ENCODE measurements at regions of chr9 and their contacts with region 1.

Region 1: DNA sequence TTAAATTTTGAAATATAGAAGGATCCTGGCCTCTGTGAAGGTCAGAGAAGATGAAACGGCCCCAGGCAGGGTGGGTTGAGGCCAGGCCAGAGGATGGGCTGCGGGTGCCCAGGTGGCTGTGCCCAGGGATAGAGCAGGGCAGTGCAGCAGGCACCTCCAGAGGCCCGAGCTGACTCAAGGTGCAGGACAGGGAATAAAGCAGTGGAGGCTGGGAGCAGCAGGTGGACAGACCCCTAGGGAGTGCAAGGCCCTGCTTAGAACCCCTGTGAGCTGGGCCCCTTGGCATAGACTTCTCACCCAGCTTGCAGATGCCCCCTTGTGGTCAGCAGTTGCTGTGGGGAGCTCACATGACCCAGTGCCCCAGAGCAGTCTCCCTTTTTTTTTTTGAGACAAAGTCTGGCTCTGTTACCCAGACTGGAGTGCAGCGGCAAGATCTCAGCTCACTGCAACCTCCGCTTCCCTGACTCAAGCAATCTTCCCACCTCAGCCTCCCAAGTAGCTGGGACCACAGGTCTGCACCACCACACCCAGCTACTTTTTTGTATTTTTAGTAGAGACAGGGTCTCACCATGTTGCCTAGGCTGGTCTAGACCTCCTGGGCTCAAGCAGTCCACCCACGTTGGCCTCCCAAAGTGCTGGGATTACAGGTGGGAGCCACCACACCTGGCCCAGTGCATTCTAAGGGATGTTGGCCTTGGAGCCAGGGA is 118.8 kb downstream of the WNK2 start:
- DNase-seq: peak; percentile 72
- ATAC-seq: peak; percentile 40
- H3K4me3 Mint-ChIP-seq: no peak overlapping the region
- H3K27ac Mint-ChIP-seq: no peak overlapping the region
- H3K4me1 Mint-ChIP-seq: peaks cover 12% of the 10 kb centered on the region
- H3K27me3 Mint-ChIP-seq: no peaks in the 10 kb centered on the region
- CTCF ChIP-seq: peak; percentile 47

Region 2: DNA sequence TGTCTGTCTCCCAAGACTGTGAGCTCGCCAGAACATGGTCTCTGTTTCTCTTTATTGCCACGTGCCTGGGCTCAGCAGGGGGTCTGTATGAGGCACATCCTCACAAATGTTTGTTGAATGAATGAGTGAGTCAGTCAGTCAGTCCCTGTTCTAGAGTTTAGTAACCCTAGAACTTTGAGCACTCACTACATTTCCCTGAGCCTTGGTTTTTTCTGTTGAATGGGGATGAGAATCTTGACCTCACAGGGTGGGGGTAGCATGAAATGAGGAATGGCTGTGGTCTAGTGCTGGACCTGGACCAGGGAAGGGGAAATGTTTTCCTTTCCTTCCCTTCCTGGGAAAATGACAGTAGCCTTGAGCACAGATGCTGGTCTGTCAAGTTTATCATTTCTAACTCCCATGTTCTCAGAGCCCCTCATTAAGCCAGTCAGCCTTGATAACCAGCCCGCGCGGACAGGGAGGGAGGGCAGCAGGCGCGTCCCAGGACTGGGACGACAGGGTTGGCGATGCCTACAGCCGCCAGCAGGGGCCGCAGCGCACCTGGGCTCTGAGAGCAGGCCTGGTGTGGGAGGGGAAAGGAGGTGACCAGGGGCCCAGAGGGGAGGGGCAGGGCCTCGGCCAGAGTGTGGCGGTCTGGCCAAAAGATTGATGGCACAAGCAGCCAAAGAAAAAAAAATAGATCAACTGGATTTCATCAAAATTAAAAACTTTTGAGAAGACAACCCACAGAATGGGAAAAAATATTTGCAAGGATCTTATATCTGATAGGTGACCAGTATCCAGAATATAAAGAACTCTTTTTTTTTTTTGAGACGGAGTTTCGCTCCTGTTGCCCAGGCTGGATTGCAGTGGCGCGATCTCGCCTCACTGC is 142.9 kb before region 1 on chr9:
- CTCF ChIA-PET with region 1: interaction called, 30 read pairs
- POLR2A ChIA-PET with region 1: no interaction called
- DNase-seq: peak; percentile 96
- ATAC-seq: peak; percentile 99
- H3K4me3 Mint-ChIP-seq: no peak overlapping the region
- H3K27ac Mint-ChIP-seq: no peak overlapping the region
- H3K4me1 Mint-ChIP-seq: no peaks in the 10 kb centered on the region
- H3K27me3 Mint-ChIP-seq: peaks cover 3% of the 10 kb centered on the region; the same call in 1 of the 2 replicates
- CTCF ChIP-seq: peak; percentile 91

Region 3: GRCh38 chr9:93183609-93184431 is 118.9 kb before region 1 on chr9 and contains the start of gene WNK2:
- CTCF ChIA-PET with region 1: interaction called, 11 read pairs
- POLR2A ChIA-PET with region 1: no interaction called
- DNase-seq: peak; percentile 55
- ATAC-seq: peak; percentile 67
- H3K4me3 Mint-ChIP-seq: peak within 1 kb of the TSS; percentile 71
- H3K27ac Mint-ChIP-seq: no peak within 1 kb of the TSS
- H3K4me1 Mint-ChIP-seq: peaks cover 29% of the 10 kb centered on the region
- H3K27me3 Mint-ChIP-seq: peaks cover 31% of the 10 kb centered on the region
- CTCF ChIP-seq: no peak
- total RNA-seq, gene WNK2: 113 to 121 TPM (median 120 TPM) in 3 replicates

Region 4: DNA sequence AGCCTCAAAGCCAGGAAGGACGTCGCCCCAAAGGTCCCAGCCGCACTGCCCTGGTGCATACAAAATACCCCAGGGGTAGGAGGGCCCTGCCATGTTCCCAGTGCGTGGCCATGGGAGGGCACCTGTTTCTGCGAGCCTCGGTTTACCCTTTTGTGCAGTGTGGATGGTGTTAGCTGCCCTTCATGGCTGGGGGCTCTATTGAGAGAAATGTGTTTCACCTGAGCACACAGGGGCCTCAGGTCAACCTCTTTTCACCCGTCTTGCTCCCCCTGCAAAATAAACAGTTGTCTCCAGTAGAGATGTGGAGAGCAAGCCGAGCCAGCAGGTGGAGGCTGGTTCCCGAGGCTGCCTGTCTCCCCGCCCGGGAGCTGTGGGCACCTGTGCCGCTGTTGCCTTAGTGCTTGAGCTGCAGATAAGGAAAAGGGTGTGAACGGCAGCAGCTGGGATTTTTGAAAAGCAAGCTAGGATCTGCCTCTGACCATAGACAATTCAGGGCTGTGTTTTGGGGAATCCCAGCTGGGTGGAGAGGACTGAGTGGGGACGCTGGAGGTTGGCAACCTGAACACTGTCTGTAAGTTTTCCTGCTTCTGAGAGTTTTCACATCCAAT is 109.5 kb before region 1 on chr9:
- CTCF ChIA-PET with region 1: interaction called, 10 read pairs
- POLR2A ChIA-PET with region 1: no interaction called
- DNase-seq: no peak
- ATAC-seq: no peak
- H3K4me3 Mint-ChIP-seq: no peak overlapping the region
- H3K27ac Mint-ChIP-seq: peak overlapping the region; percentile 63
- H3K4me1 Mint-ChIP-seq: peaks cover 63% of the 10 kb centered on the region
- H3K27me3 Mint-ChIP-seq: no peaks in the 10 kb centered on the region
- CTCF ChIP-seq: no peak

Region 5: GRCh38 chr9:93288891-93289883 is 13.5 kb before region 1 on chr9:
- CTCF ChIA-PET with region 1: interaction called, 36 read pairs
- POLR2A ChIA-PET with region 1: interaction called, 3 read pairs
- DNase-seq: no peak
- ATAC-seq: peak; percentile 34
- H3K4me3 Mint-ChIP-seq: no peak overlapping the region
- H3K27ac Mint-ChIP-seq: no peak overlapping the region
- H3K4me1 Mint-ChIP-seq: peaks cover 9% of the 10 kb centered on the region; the same call in 1 of the 2 replicates
- H3K27me3 Mint-ChIP-seq: no peaks in the 10 kb centered on the region; the same call in 1 of the 2 replicates
- CTCF ChIP-seq: no peak